Activated T-helper 1 cell treated with anti-CD3 and anti-CD28 coated beads, Interleukin-12 subunit alpha, Interleukin-12 subunit beta, Interleukin-2, Interleukin-4 antibody, amounts not matched to agents 30 ng/mL and 10 ng/mL and 1 ng/mL, durations not matched to agents 14 hours and 24 hours and 36 hours (primary cell): ENCODE measurements at regions of chr5 and their contacts with region 1.

Region 1: GRCh38 chr5:41856644-41857491 is 13.4 kb downstream of the OXCT1 start:
- DNase-seq: peak; percentile 46
- H3K4me3 Mint-ChIP-seq: no peak overlapping the region
- H3K27ac Mint-ChIP-seq: no peak overlapping the region
- H3K4me1 Mint-ChIP-seq: peaks cover 27% of the 10 kb centered on the region
- H3K27me3 Mint-ChIP-seq: no peaks in the 10 kb centered on the region

Region 2: DNA sequence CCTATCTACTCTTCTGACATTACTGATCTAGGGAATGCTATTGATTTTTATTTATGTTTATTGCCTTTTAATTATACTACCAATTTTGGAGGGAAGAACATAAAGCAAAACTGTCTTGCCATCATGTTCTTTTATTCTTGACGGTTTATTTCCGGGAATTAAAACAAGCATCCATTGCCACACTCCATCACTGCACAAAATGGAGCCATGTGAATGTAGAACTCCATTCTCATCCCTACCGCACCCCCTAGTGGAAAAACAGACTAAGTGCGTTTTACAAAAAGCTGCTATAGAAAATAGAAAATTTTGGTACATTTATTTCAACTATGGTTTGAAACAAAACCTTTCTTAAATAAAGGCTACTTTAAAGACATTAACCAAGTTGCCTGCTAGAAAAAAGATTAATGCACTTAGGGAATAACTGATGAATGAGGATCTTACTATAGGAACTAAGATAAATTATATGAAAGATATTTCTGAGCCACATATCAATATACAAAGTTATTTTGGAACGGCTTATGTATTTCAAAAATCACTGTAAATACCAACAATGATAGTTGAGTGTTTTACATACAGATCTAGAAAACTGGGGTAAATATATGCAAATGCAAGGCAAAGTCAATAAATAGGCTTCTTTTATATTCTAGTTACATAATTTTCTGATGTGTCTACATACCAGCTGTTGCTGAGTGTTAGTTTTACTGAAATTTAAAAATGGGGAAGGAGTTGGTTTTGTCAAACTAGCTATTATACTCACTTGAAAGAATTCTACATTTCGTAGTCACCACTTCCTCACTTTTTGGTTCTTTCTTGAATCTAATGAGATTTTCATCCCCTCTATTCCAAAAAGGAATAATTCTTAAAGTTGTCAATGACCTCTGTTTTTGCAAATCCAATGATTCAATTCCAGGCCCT is 13.2 kb before region 1 on chr5:
- intact Hi-C with region 1: loop called (anchors 1 kb)
- DNase-seq: no peak
- H3K4me3 Mint-ChIP-seq: no peak overlapping the region
- H3K27ac Mint-ChIP-seq: no peak overlapping the region
- H3K4me1 Mint-ChIP-seq: no peaks in the 10 kb centered on the region
- H3K27me3 Mint-ChIP-seq: no peaks in the 10 kb centered on the region

Region 3: GRCh38 chr5:41878643-41879478 is 22.0 kb after region 1 on chr5:
- intact Hi-C with region 1: no loop called
- DNase-seq: no peak
- H3K4me3 Mint-ChIP-seq: no peak overlapping the region
- H3K27ac Mint-ChIP-seq: no peak overlapping the region
- H3K4me1 Mint-ChIP-seq: peaks cover 17% of the 10 kb centered on the region
- H3K27me3 Mint-ChIP-seq: peaks cover 5% of the 10 kb centered on the region

Region 4: DNA sequence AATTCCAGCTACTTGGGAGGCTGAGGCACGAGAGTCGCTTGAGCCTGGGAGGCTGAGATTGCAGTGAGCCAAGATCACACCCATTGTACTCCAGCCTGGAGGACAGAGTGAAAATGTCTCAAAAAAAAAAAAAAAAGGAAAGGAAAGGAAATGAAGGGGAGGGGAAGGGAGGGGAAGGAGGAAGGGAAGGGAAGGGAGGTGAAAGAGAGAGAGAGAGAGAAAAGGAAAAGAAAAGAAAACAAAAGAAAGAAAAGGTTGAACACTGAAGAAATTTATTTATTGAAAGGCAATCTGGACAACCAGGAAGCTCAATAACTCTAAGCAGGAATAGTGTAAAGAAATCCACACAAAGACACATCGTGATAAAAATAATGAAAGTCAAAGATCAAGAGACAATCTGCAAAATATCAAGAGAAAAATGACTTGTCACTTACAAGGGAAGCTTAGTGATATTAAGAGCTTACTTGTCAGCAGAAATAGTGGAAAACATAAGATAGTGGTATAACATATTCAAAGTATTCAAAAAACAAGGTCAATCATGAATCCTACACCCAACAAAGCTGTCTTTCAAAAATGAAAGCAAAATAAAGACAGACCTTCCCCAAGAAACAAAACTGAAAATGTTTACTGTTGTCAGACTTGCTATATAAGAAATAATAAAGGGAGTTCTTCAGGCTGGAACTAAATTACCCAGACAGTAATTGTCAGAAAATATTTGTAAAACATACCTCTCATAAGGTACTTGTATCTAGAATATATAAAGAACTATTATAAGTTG is 36.4 kb after region 1 on chr5:
- intact Hi-C with region 1: loop called (anchors 1 kb)
- DNase-seq: no peak
- H3K4me3 Mint-ChIP-seq: peak overlapping the region; percentile 38
- H3K27ac Mint-ChIP-seq: peak overlapping the region; percentile 4
- H3K4me1 Mint-ChIP-seq: peaks cover 24% of the 10 kb centered on the region
- H3K27me3 Mint-ChIP-seq: peaks cover 19% of the 10 kb centered on the region

Region 5: DNA sequence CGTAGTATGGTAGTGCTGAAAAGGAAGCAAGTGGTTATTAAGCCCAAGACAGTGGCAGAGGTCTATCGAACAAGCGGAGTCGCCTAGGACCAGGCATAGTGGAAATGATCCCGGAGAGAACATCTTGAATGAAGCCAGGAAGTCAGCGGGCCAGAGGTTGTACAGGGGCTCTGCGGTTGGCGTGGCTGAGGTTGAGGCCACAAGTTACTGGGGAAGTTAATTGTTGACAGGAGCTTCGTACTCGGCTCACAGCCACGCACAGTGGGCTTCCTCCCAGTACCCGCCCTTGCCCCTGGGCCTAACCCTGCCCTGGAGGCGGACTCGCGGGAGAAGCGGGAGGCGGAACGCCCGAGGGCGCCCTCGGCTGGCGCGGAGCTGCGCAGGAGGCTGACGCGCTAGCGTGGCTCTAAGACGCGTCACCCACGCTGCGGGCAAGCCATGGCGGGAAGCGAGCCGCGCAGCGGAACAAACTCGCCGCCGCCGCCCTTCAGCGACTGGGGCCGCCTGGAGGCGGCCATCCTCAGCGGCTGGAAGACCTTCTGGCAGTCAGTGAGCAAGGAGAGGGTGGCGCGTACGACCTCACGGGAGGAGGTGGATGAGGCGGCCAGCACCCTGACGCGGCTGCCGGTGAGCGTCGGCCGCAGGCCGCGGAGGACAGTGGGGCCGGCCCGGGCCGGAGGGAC is 68.1 kb after region 1 on chr5 and contains the start of gene FBXO4:
- intact Hi-C with region 1: loop called (anchors 1 kb)
- DNase-seq: peak; percentile 87
- H3K4me3 Mint-ChIP-seq: peak within 1 kb of the TSS; percentile 91
- H3K27ac Mint-ChIP-seq: peak within 1 kb of the TSS; percentile 98
- H3K4me1 Mint-ChIP-seq: peaks cover 13% of the 10 kb centered on the region
- H3K27me3 Mint-ChIP-seq: no peaks in the 10 kb centered on the region
- total RNA-seq, gene FBXO4: 14.1 and 17.8 TPM in 2 replicates

Region 6: DNA sequence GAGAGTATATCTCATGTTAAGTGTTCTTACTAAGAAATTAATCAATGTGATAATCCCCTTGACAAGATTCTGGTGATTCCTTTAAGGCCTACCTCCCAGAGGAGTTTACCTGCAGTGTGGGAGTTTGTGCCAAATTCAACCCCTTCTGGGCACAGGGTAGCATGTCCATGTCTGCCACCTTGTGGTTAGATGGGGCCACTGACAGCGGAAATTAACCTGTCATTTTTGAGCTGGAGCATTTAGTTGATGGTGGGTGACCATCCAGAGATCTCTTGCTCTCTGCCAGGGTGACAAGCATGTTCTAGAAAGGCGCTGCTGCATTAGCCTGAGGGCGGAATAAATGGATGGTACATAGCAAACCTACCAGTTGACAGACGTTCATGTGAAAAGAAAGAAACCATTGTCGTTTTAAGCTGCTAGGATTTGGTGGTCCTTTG is 200.4 kb after region 1 on chr5:
- intact Hi-C with region 1: loop called (anchors 1 kb)
- DNase-seq: peak; percentile 31
- H3K4me3 Mint-ChIP-seq: no peak overlapping the region
- H3K27ac Mint-ChIP-seq: no peak overlapping the region
- H3K4me1 Mint-ChIP-seq: no peaks in the 10 kb centered on the region
- H3K27me3 Mint-ChIP-seq: peaks cover 6% of the 10 kb centered on the region

Region 7: GRCh38 chr5:42131081-42131480 is 274.2 kb after region 1 on chr5:
- intact Hi-C with region 1: no loop called
- DNase-seq: no peak
- H3K4me3 Mint-ChIP-seq: no peak overlapping the region
- H3K27ac Mint-ChIP-seq: no peak overlapping the region
- H3K4me1 Mint-ChIP-seq: no peaks in the 10 kb centered on the region
- H3K27me3 Mint-ChIP-seq: no peaks in the 10 kb centered on the region